GM18951 (cell line): ENCODE measurements at regions of chr6 and their contacts with region 1.

Region 1: GRCh38 chr6:28355743-28356665 is 6.3 kb downstream of the ZKSCAN3 start:
- POLR2A ChIP-seq: peak; percentile 24

Region 2: DNA sequence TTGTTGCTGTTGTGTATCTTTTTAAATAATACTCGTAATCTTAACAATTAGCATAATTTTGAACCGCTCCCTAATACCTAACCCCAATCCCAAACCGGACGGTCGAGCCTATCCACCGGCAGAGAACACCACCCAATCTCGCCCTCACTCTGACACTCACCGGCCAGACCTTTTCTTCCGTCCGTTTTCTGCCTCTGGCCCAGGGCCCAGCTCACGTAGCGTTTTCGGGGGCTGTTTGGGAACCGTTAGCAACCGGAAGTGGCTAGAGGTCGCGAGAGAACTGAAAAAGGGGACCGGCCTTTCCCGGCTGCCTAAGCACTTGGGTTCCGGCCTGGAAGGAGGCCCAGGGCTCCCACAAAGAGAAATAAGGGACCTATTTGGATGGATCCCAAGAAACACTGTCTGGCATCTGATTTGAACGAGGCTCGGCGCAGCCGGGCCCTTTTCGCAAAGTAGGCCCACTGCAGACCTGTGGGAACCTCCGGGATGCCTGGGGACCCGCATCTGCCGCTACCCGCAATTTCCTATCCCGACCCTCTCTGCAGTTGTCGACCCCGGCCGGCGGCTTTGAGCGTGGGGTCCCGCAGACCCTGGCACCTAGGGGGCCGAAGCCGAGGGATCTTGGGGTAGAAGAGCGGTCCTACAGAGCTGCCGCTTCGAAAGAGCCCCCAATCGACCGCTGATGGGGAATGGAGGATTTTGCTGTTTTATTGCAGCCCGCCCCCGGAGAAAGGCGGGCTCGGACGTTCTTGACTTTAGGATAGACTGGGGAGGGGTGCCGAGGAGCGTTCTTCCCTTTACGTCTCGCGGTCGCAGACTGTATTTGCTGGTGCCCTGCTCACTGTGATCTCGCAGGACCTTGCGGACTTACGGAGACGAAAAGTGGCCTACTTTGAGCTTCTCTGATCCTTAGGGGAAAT is 219.2 kb before region 1 on chr6:
- in situ Hi-C with region 1: loop called (anchors 10 kb)
- POLR2A ChIP-seq: peak; percentile 73

Region 3: GRCh38 chr6:28258877-28259767 is 96.9 kb before region 1 on chr6 and contains the start of gene NKAPL:
- in situ Hi-C with region 1: no loop called
- POLR2A ChIP-seq: peak; percentile 26